ENCODE measurements at regions of chr1 and their contacts with region 1.

Region 1: GRCh38 chr1:6460301-6461050 is 5.5 kb downstream of the TNFRSF25 start:
- DNase-seq: peak; percentile 91
- ATAC-seq: peak; percentile 87
- H3K4me3 Mint-ChIP-seq: peak overlapping the region; percentile 66
- H3K27ac Mint-ChIP-seq: peak overlapping the region; percentile 93
- H3K4me1 Mint-ChIP-seq: peaks cover 50% of the 10 kb centered on the region
- H3K27me3 Mint-ChIP-seq: peaks cover 16% of the 10 kb centered on the region
- CTCF ChIP-seq: no peak

Region 2: GRCh38 chr1:6448749-6449631 is 11.5 kb before region 1 on chr1:
- CTCF ChIA-PET with region 1: interaction called, 20 read pairs
- POLR2A ChIA-PET with region 1: interaction called, 5 read pairs
- intact Hi-C with region 1: no loop called
- DNase-seq: peak; percentile 45
- ATAC-seq: peak; percentile 54
- H3K4me3 Mint-ChIP-seq: peak overlapping the region; percentile 32
- H3K27ac Mint-ChIP-seq: no peak overlapping the region
- H3K4me1 Mint-ChIP-seq: peaks cover 29% of the 10 kb centered on the region
- H3K27me3 Mint-ChIP-seq: peaks cover 62% of the 10 kb centered on the region
- CTCF ChIP-seq: no peak

Measured in activated CD8-positive, alpha-beta T cell treated with anti-CD3 and anti-CD28 coated beads for 36 hours (primary cell).